AG04450 (cell line): ENCODE measurements at regions of chr11 and their contacts with region 1.

Region 1: DNA sequence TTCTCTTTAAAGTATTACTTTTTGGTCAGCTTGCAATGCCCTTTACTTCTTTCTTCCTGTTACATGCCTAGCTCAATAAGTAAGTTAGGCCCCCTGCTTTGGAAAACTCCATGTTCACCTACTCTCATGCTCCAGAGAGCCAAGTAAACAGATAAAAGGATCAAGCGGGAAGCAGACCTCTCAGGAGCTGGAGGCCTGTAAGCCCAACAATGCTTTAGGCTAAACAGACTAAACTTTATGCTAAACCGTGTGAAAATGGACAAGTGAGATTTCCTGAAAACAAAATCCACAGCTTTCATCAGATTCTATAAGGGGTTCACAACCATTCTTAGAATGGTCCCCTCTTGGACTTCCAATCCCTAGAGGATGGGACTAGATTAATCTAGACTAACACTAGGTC is 40.2 kb downstream of the CELF1 start:
- DNase-seq: no peak
- H3K4me3 ChIP-seq: no peak overlapping the region
- H3K27ac ChIP-seq: peak overlapping the region; percentile 4
- H3K27me3 ChIP-seq: no peaks in the 10 kb centered on the region
- CTCF ChIP-seq: no peak

Region 2: GRCh38 chr11:46625391-46625790 is 887.3 kb before region 1 on chr11:
- CTCF ChIA-PET with region 1: no interaction called
- POLR2A ChIA-PET with region 1: interaction called, 15 read pairs
- DNase-seq: no peak
- H3K4me3 ChIP-seq: no peak overlapping the region
- H3K27ac ChIP-seq: no peak overlapping the region
- H3K27me3 ChIP-seq: no peaks in the 10 kb centered on the region
- CTCF ChIP-seq: no peak